Activated T-helper 2 cell treated with anti-CD3 and anti-CD28 coated beads, Interferon-gamma antibody, Interleukin-2, Interleukin-4, amounts not matched to agents 10 μg/mL and 5 μg/mL and 100 μg/mL, durations not matched to agents 14 hours and 24 hours and 36 hours (primary cell): ENCODE measurements at regions of chr15 and their contacts with region 1.

Region 1: DNA sequence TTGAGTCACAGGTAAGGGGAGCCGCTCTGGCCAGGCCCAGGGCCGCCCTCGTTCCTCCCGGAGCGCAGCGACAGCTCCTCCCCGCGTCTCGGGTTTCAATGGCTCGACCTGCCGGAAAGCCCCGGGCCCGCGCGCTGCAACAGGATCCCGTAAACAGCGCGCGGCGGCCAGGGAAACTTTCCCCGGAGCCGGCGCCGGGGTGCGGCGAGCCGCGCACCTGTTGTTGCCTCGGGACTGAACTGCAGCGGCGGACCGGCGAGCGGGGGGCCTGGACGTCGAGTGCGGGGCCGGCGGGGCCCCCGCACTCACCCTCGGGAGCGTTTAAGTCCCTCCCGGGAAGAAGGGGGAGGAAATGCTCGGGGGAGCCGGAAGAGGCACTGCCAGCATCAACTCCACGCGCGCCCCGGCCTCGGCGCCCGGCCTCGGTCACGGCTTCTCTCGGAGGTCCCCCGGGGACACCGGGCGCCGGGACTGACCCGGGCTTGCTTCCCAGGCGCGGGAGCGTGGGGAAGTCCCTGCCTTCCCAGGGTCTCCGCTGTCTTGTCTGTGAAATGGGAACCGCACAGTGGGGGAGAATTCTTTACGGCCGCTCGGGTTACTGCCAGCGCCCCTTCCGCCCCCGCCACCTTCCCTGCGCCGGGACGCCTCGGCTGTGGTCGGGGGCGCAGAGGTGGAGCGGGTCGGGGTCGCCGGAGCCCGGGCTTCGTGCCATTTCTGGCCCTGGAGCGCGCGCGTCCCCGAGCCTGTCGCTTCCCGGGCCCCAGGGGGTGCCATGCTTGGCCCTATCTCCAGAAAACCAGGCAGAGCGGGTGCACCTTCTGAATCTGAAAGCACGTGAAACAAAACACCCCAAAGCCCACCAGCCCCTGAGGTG is 7.4 kb upstream of the PGPEP1L start:
- DNase-seq: peak; percentile 32
- H3K4me3 Mint-ChIP-seq: peak overlapping the region; percentile 75
- H3K27ac Mint-ChIP-seq: peak overlapping the region; percentile 60
- H3K4me1 Mint-ChIP-seq: peaks cover 1% of the 10 kb centered on the region
- H3K27me3 Mint-ChIP-seq: peaks cover 36% of the 10 kb centered on the region

Region 2: GRCh38 chr15:99059010-99059981 is 44.3 kb after region 1 on chr15:
- intact Hi-C with region 1: loop called (anchors 2 kb)
- DNase-seq: peak; percentile 34
- H3K4me3 Mint-ChIP-seq: peak overlapping the region; percentile 60
- H3K27ac Mint-ChIP-seq: no peak overlapping the region
- H3K4me1 Mint-ChIP-seq: peaks cover 4% of the 10 kb centered on the region
- H3K27me3 Mint-ChIP-seq: peaks cover 43% of the 10 kb centered on the region

Region 3: GRCh38 chr15:99651023-99651807 is 636.2 kb after region 1 on chr15:
- intact Hi-C with region 1: no loop called
- DNase-seq: no peak
- H3K4me3 Mint-ChIP-seq: no peak overlapping the region
- H3K27ac Mint-ChIP-seq: peak overlapping the region; percentile 21
- H3K4me1 Mint-ChIP-seq: peaks cover 15% of the 10 kb centered on the region
- H3K27me3 Mint-ChIP-seq: no peaks in the 10 kb centered on the region